Spleen (tissue), 13 donors: ENCODE measurements at regions of chr4 and their contacts with region 1.

Region 1: GRCh38 chr4:1726146-1726934 is 5.0 kb downstream of the TACC3 start:
- DNase-seq: peak; percentile 97
- H3K4me3 ChIP-seq: peak overlapping the region in 3 of 8 donors; percentile 12 to 52 (median 18)
- H3K27ac ChIP-seq: peak overlapping the region in 7 of 8 donors; percentile 14 to 100 (median 82)
- H3K4me1 ChIP-seq: peaks cover 42 to 100% (median 93%) of the 10 kb centered on the region in 6 donors
- H3K27me3 ChIP-seq: no peaks in the 10 kb centered on the region
- CTCF ChIP-seq: peak; percentile 96 to 100 (median 99)
- POLR2A ChIP-seq: no peak

Region 2: DNA sequence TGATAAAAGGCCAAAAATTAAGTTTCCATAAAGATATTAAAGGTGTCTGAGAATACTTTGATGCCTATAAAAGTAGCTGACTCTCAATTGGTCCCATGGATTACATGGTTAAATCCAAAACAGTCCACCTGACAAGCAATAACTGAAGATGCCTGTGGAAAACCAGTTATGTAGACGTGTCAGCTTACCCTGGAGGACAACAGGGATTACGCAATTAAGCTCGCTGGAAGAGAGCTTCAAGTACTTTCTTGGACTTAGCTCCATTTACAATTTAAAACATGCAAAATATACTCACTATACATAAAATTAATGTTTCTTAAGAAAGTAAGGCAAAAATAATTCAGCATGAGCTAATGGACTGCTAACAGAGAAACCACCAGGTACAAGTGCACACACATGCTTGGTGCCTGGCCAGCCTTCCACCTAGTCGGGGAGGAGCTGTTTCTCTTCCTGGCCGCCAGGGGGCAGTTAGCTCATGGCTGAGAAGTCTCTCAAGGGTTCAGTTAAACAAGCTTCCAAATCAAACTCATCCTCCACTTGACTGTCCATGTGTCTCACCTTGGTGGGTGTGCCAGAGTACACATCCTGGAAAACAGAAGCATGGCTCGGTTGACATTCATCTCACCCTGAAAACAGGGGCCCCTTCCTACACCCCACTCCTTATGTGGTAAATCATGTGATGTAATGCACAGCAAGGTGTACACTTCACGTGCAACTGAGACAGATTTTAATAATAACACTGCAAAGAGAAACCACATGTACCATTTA is 33.0 kb before region 1 on chr4:
- intact Hi-C with region 1: loop called (anchors 5 kb)
- DNase-seq: peak; percentile 94
- H3K4me3 ChIP-seq: no peak overlapping the region
- H3K27ac ChIP-seq: peak overlapping the region in 2 of 8 donors; percentile 19 to 39
- H3K4me1 ChIP-seq: peaks cover 0 to 11% (median 8%) of the 10 kb centered on the region in 6 donors
- H3K27me3 ChIP-seq: no peaks in the 10 kb centered on the region
- CTCF ChIP-seq: peak; percentile 85 to 99 (median 94)
- POLR2A ChIP-seq: no peak

Region 3: DNA sequence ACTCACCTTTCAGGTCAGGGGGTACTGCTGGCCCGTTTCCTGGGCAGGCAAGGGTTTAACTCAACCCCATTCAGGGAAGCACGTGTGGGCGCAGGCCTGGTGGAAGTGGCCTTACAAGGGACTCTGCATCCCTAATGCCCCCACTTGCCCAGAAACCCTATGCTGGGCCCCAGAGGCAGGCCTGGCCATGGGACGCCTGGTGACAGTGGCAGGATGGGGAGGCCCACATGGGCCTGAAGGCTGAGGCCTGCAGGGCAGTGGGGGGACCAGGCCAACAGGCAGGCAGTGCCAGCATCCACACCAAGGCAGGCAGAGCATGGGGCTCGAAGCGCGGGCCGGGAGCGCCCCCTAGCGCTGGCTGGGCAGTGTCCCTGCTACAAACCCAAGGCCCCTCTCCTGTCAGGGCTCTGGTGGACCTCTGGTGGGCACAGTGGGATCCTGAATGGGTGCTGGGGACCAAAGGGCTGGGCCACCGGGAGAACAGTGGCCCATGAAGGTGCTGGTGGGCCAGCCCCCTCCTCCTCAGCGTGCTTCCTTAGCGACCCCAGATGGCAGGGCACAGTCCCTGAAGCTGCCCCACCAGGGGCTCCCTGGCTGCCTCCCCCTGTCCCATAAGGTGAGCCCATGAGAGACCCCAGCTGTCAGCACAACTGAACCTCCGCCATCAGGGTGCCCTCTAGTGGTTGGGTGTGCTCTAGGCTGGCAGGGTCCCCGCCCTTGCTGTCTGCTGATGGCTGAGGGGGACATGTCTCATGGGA is 83.6 kb after region 1 on chr4:
- intact Hi-C with region 1: no loop called
- DNase-seq: peak; percentile 89
- H3K4me3 ChIP-seq: no peak overlapping the region
- H3K27ac ChIP-seq: no peak overlapping the region
- H3K4me1 ChIP-seq: peaks cover 0 to 4% (median 0%) of the 10 kb centered on the region in 6 donors
- H3K27me3 ChIP-seq: no peaks in the 10 kb centered on the region
- CTCF ChIP-seq: peak; percentile 42 to 90 (median 82)
- POLR2A ChIP-seq: no peak